ENCODE measurements at regions of chr11 and their contacts with region 1.

Region 1: DNA sequence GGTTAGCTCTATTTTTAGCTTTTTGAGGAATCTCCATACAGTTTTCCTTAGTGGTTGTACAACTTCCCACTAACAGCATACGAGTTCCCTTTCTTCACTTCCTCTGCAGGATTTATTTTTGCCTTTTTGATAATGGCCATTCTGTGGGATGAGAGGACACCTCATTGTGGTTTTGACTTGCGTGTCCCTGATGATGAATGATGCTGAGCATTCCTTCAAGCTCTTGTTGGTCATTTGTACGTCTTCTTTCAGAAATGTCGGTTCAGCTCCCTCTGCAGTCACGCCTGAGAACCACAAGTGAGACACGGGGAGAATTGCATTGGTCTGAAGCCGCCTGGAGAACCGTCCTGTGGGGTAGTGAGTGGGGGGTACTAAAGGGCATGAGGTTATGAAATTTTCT is 2.0 kb upstream of the KRTAP5-10 start:
- DNase-seq: peak; percentile 67

Region 2: GRCh38 chr11:71580057-71581003 is 16.9 kb after region 1 on chr11:
- CTCF ChIA-PET with region 1: interaction called, 10 read pairs
- POLR2A ChIA-PET with region 1: no interaction called
- DNase-seq: peak; percentile 69

Measured in HEK293T (cell line).